OCI-LY7 (cell line): ENCODE measurements at regions of chr9 and their contacts with region 1.

Region 1: DNA sequence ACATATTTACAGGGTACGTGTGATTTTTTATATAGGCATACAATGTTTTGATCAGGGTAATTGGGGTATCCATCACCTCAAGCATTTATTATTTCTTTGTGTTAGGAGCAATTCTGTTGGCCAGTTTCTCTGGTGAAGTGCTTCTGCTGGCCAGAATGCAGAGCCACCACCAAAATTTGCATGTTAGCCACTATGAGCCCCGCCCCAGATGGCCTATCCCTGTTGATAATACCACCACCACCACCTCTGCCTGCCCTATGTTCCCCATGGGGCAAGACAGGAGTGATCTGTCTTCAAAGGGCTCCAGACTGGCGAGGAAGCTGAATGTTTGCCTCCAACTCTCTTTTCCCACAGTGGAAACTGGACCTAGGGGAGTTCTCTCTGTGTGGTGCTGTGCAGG is 26.0 kb upstream of the JAK2 start:
- DNase-seq: no peak
- H3K4me3 ChIP-seq: no peak overlapping the region
- H3K27ac ChIP-seq: no peak overlapping the region
- H3K4me1 ChIP-seq: no peaks in the 10 kb centered on the region
- CTCF ChIP-seq: no peak

Region 2: DNA sequence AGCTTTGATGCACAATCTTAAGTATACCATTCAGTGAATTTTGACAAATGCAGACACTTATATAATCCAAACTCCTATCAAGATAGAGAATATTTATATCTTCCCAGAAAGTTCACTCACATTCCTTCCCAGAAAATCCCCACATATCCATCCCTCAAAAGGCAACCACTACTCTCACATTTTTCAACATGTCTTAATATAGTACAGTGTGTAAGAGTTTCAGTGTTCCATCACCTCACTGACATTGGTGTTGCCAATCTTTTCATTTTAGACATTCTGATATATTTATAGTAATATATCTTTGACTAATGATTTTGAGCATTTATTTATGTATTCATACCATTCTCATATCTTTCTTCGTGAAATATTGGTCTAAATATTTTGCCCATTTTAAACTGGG is 12.1 kb before region 1 on chr9:
- CTCF ChIA-PET with region 1: no interaction called
- POLR2A ChIA-PET with region 1: interaction called, 6 read pairs
- intact Hi-C with region 1: loop called (anchors 1 kb)
- DNase-seq: no peak
- H3K4me3 ChIP-seq: no peak overlapping the region
- H3K27ac ChIP-seq: no peak overlapping the region
- H3K4me1 ChIP-seq: no peaks in the 10 kb centered on the region
- CTCF ChIP-seq: no peak